Colonic mucosa (tissue), 4 donors: ENCODE measurements at regions of chr1 and their contacts with region 1.

Region 1: DNA sequence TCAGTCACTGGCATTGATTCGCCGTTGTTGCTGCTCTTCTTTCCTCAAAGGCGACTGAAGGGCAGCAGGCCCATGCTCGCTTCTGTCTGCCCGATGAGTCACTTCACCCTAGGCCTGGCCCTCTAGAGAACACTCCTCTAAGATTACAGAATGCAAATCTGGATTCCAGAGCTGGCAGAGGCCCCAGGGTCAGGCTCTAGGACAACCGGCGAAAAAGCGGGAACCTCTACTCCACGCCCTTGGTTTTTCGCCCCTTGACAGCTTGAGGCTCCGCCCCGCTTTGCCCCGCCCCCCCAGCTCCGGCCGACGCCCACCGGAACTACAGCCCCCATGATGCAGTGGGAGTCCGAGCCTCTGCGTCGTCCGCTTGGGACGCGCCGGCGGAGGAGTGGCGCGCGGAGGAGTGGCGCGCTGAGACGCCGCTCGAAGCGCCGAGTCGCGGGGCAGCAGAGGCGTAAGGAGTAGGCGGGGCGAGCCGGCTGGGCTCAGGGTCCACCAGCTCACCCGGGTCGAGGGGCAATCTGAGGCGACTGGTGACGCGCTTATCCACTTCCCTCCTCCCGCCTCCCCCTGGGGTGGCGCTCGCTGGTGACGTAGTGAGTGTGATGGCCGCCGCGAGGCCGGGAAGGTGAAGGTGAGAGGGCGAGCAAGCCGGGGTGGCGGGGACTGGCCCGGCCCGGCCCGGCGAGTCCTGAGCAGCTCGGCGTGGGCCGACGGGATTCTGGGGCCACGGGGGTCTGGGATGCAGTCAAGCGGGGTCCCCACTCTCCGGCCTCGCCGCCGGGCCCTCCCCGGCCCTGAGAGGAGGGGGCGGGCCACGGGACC is at the start of gene MFN2:
- DNase-seq: peak; percentile 97
- H3K4me3 ChIP-seq: peak within 1 kb of the TSS; percentile 87
- H3K27ac ChIP-seq: peak within 1 kb of the TSS; percentile 85
- H3K4me1 ChIP-seq: peaks cover 21% of the 10 kb centered on the region
- H3K27me3 ChIP-seq: no peaks in the 10 kb centered on the region
- CTCF ChIP-seq: no peak
- total RNA-seq, gene MFN2: 102 to 110 TPM

Region 2: DNA sequence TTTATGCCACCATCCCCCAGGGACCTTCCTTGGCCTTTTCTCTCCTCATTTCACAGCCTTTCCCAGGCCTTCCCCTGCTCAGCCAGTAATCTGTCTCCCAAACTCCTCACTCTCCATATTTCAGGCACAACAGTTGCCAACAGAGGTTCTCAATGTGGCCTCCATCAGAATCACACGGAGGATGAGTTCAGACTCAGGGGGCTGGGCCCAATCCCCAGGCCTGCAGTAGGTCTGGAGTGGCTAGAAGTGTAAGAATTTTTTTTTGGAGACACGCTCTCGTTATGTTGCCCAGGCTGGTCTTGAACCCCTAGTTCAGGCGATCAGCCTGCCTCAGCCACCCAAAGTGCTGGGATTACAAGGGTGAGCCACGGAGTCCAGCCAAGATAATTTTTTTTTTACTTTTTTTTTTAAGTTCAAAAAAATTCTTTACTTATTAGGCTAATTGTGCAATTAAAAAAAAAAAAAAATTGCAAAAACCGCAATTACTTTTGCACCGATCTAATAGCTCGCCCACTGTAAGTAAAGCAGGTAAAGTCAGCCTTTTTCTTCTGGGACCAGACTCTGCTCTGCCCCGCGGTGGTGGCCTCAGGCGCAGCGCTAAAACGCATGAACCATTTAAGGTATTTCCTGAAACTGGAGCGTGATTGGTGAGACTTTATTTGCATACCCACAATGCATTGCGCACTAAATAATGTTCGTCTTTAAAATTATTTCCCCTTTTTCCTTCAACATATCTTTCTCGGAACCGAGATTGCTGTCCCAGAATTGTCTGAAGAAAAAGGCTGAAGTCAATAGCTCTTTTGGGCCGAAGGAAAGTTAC is 72.6 kb before region 1 on chr1:
- intact Hi-C with region 1: loop called (anchors 5 kb)
- DNase-seq: peak; percentile 93
- H3K4me3 ChIP-seq: peak overlapping the region; percentile 41
- H3K27ac ChIP-seq: peak overlapping the region; percentile 96
- H3K4me1 ChIP-seq: no peaks in the 10 kb centered on the region
- H3K27me3 ChIP-seq: no peaks in the 10 kb centered on the region
- CTCF ChIP-seq: peak; percentile 89